ENCODE measurements at regions of chr15 and their contacts with region 1.

Region 1: DNA sequence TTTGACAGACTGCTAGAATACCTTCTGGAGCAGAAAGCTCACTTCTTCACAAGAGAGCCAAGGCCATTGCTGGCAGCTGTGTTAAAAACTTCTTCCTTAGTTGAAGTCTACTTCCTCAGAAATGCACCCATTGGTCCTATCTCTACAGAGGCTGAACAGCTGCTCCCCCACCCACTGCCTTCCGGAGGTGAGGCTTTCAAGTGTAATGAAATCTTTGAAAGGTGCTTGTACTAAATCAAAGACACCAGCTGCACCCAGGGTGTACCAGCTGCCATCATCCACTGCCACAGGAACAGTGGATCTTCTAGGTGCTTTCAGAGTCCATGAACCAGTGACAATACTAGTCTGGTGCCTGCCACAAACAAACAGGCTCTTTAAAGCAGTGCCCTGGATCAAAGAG is 26.4 kb upstream of the HERC1 start:
- DNase-seq: peak; percentile 76
- ATAC-seq: peak; percentile 71
- H3K4me3 Mint-ChIP-seq: peak overlapping the region; percentile 41
- H3K27ac Mint-ChIP-seq: peak overlapping the region; percentile 92
- H3K4me1 Mint-ChIP-seq: peaks cover 63% of the 10 kb centered on the region
- H3K27me3 Mint-ChIP-seq: no peaks in the 10 kb centered on the region

Region 2: DNA sequence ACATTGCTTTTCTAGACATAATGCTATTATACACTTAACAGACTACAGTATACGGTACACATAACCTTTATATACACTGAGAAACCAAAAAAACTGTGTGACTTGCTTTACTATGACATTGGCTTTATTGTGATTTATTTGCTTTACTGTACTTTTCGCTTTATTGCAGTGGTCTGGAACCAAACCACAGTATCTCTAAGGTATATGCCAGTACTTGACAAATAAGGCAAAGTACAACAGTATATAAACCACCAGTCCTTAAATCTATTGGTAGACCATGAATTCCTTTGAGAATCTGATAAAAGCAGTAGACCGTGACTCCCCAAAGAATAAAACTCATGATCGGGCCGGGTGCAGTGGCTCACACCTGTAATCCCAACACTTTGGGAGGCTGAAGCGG is 76.7 kb before region 1 on chr15:
- CTCF ChIA-PET with region 1: no interaction called
- POLR2A ChIA-PET with region 1: no interaction called
- intact Hi-C with region 1: no loop called
- DNase-seq: no peak
- ATAC-seq: no peak
- H3K4me3 Mint-ChIP-seq: no peak overlapping the region
- H3K27ac Mint-ChIP-seq: no peak overlapping the region
- H3K4me1 Mint-ChIP-seq: peaks cover 30% of the 10 kb centered on the region
- H3K27me3 Mint-ChIP-seq: no peaks in the 10 kb centered on the region

Region 3: GRCh38 chr15:63809452-63809851 is 50.7 kb before region 1 on chr15:
- CTCF ChIA-PET with region 1: no interaction called
- POLR2A ChIA-PET with region 1: no interaction called
- intact Hi-C with region 1: no loop called
- DNase-seq: no peak
- ATAC-seq: no peak
- H3K4me3 Mint-ChIP-seq: no peak overlapping the region
- H3K27ac Mint-ChIP-seq: no peak overlapping the region
- H3K4me1 Mint-ChIP-seq: peaks cover 83% of the 10 kb centered on the region
- H3K27me3 Mint-ChIP-seq: no peaks in the 10 kb centered on the region

Region 4: DNA sequence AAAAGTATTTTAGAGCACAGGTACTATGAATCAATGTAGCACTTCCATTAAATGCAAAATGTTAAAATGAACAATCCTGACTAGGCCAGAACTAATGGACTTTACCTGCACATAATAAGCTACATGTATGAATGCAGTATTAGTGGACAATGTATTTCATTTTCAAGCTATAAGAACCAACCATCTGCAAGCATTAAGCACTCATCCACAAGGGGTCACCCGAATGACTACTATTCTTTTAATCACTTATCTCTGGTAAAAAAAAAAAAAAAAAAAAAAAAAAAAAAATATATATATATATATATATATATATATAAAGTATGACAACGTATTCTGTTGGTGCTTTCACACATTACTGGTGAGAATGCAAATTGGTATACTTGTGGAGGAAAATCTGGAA is 33.6 kb before region 1 on chr15:
- CTCF ChIA-PET with region 1: no interaction called
- POLR2A ChIA-PET with region 1: interaction called, 3 read pairs
- intact Hi-C with region 1: loop called in 1 of 2 experiments (anchors 5 kb)
- DNase-seq: peak; percentile 41
- ATAC-seq: no peak
- H3K4me3 Mint-ChIP-seq: no peak overlapping the region
- H3K27ac Mint-ChIP-seq: peak overlapping the region; percentile 74
- H3K4me1 Mint-ChIP-seq: peaks cover 79% of the 10 kb centered on the region
- H3K27me3 Mint-ChIP-seq: no peaks in the 10 kb centered on the region

Region 5: GRCh38 chr15:63870403-63871209 is 10.5 kb after region 1 on chr15:
- CTCF ChIA-PET with region 1: interaction called, 17 read pairs
- POLR2A ChIA-PET with region 1: interaction called, 5 read pairs
- intact Hi-C with region 1: no loop called
- DNase-seq: no peak
- ATAC-seq: peak; percentile 17
- H3K4me3 Mint-ChIP-seq: no peak overlapping the region
- H3K27ac Mint-ChIP-seq: no peak overlapping the region
- H3K4me1 Mint-ChIP-seq: peaks cover 24% of the 10 kb centered on the region
- H3K27me3 Mint-ChIP-seq: no peaks in the 10 kb centered on the region

Region 6: DNA sequence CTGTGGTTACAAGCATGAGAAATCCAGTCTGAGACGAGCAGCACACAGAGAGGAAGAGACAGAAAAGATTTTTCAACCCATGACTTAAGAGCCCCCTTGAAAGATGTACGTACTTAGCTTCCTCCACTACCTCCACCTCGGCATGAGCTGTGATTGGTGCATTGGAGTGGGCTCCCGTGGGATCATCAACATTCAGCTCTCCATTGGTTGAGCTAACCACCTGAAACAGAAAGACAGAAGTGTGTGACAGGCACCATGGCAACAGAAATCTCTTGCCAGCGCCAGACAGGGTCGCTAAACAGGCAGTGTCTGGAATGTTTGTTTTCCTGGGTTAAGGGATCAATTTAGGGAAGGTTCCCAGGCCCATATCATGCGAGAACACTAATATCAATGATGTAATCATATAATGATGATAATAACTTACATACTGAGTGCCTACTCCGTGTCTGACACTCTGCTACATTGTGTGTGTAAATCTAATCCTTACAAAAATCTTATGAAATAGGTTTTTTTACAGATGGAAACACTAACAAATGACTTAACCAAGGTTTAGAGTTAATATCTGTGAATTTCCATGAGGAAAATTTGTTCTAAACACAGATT is 320.2 kb after region 1 on chr15:
- CTCF ChIA-PET with region 1: no interaction called
- POLR2A ChIA-PET with region 1: no interaction called
- intact Hi-C with region 1: no loop called
- DNase-seq: no peak
- ATAC-seq: no peak
- H3K4me3 Mint-ChIP-seq: no peak overlapping the region
- H3K27ac Mint-ChIP-seq: no peak overlapping the region
- H3K4me1 Mint-ChIP-seq: no peaks in the 10 kb centered on the region
- H3K27me3 Mint-ChIP-seq: no peaks in the 10 kb centered on the region

Measured in activated CD4-positive, alpha-beta T cell treated with anti-CD3 and anti-CD28 coated beads for 36 hours (primary cell).